ENCODE measurements at regions of chr18 and their contacts with region 1.

Region 1: GRCh38 chr18:36284671-36285295 is 12.7 kb upstream of the FHOD3 start:
- DNase-seq: no peak
- ATAC-seq: peak; percentile 63
- H3K4me3 ChIP-seq: no peak overlapping the region
- H3K27ac ChIP-seq: no peak overlapping the region
- H3K4me1 ChIP-seq: no peaks in the 10 kb centered on the region
- H3K27me3 ChIP-seq: peaks cover 0 to 1% of the 10 kb centered on the region in 2 donors

Region 2: DNA sequence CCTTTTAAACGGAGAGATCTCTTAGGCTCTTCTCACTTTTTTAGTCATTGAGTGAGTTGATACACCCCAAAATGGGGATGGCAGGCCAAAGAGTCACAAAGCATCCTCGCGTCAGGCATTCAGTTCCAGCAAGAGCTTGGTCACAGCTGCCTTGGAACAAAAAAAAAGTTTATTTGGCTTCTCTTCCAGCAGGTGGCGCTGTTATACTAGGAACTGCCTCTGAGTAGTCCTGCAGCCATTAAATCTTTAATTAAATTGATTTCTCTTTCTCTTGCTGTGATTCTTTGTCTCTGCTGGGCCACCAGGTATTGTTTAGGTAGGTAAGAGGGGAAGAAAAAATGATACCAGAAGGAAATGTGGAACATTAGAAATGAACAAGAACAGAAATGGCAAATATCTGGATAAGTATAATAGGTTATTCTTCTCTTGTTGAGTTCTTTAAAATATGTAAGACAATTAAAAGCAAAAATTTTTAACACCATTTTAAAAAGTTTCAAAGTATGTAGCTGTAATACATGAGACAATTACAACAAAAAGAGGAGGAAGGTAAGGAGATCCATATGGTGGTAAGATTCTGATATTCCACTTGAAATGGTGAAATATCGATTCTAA is 528.2 kb before region 1 on chr18:
- intact Hi-C with region 1: loop called (anchors 5 to 10 kb)
- DNase-seq: no peak
- ATAC-seq: peak; percentile 81
- H3K4me3 ChIP-seq: no peak overlapping the region
- H3K27ac ChIP-seq: no peak overlapping the region
- H3K4me1 ChIP-seq: no peaks in the 10 kb centered on the region
- H3K27me3 ChIP-seq: no peaks in the 10 kb centered on the region

Region 3: DNA sequence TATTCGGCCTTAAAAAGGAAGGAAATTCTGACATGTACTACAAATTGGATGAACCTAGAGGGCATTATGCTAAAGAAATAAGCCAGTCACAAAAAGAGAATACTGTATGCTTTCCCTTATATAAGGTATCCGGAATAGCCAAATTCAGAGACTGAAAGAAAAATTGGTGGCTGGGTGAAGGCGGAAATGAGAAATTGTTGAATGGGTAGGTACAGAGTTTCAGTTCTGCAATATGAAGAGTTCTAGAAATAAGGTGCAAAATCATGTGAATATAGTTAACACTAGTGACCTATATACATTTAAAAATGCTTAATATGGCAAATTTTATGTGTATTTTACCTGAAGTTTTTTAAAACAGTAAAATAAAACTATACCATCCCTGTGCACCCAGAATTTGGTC is 269.2 kb before region 1 on chr18:
- intact Hi-C with region 1: loop called (anchors 5 kb)
- DNase-seq: no peak
- ATAC-seq: no peak
- H3K4me3 ChIP-seq: no peak overlapping the region
- H3K27ac ChIP-seq: no peak overlapping the region
- H3K4me1 ChIP-seq: no peaks in the 10 kb centered on the region
- H3K27me3 ChIP-seq: no peaks in the 10 kb centered on the region

Region 4: GRCh38 chr18:36023336-36023735 is 261.4 kb before region 1 on chr18:
- intact Hi-C with region 1: loop called (anchors 5 kb)
- DNase-seq: no peak
- ATAC-seq: no peak
- H3K4me3 ChIP-seq: no peak overlapping the region
- H3K27ac ChIP-seq: no peak overlapping the region
- H3K4me1 ChIP-seq: no peaks in the 10 kb centered on the region
- H3K27me3 ChIP-seq: no peaks in the 10 kb centered on the region

Region 5: DNA sequence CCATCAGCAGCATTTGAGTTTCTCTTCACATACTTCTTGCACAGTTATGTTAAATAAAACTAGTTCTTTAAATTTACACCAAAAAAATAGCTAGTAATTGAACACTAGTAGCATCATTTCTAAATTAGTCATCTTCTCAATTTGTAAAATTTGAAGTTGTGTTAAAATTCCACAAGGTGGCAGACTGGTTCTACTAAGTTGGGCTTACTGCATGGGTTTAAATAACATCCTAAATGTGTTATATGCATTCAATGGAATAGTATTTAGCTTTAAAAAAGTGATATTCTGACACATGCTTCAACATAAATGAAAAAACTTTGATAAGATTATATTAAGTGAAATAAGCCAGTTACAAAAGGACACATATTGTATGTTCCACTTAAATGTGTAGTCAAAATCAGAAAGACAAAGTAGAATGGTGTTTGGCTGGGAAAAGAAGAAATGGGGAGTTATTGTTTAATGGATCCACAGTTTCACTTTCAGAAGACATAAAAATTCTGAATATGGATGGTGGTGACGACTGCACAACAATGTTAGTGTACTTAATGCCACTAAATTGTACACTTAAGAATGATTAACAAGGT is 188.8 kb before region 1 on chr18:
- intact Hi-C with region 1: loop called (anchors 2 to 5 kb)
- DNase-seq: no peak
- ATAC-seq: no peak
- H3K4me3 ChIP-seq: no peak overlapping the region
- H3K27ac ChIP-seq: no peak overlapping the region
- H3K4me1 ChIP-seq: no peaks in the 10 kb centered on the region
- H3K27me3 ChIP-seq: no peaks in the 10 kb centered on the region

Region 6: GRCh38 chr18:36354989-36355388 is 70.2 kb after region 1 on chr18:
- intact Hi-C with region 1: no loop called
- DNase-seq: no peak
- ATAC-seq: no peak
- H3K4me3 ChIP-seq: no peak overlapping the region
- H3K27ac ChIP-seq: no peak overlapping the region
- H3K4me1 ChIP-seq: no peaks in the 10 kb centered on the region
- H3K27me3 ChIP-seq: no peaks in the 10 kb centered on the region

Measured in aorta (tissue), 5 donors.